Posterior vena cava (tissue), 2 donors: ENCODE measurements at regions of chr6 and their contacts with region 1.

Region 1: GRCh38 chr6:31576897-31577578 is 1.7 kb downstream of the TNF start:
- DNase-seq: no peak

Region 2: GRCh38 chr6:31016659-31017299 is 560.3 kb before region 1 on chr6:
- intact Hi-C with region 1: no loop called
- DNase-seq: no peak

Region 3: GRCh38 chr6:31559958-31560696 is 16.9 kb before region 1 on chr6:
- intact Hi-C with region 1: no loop called
- DNase-seq: peak; percentile 86

Region 4: DNA sequence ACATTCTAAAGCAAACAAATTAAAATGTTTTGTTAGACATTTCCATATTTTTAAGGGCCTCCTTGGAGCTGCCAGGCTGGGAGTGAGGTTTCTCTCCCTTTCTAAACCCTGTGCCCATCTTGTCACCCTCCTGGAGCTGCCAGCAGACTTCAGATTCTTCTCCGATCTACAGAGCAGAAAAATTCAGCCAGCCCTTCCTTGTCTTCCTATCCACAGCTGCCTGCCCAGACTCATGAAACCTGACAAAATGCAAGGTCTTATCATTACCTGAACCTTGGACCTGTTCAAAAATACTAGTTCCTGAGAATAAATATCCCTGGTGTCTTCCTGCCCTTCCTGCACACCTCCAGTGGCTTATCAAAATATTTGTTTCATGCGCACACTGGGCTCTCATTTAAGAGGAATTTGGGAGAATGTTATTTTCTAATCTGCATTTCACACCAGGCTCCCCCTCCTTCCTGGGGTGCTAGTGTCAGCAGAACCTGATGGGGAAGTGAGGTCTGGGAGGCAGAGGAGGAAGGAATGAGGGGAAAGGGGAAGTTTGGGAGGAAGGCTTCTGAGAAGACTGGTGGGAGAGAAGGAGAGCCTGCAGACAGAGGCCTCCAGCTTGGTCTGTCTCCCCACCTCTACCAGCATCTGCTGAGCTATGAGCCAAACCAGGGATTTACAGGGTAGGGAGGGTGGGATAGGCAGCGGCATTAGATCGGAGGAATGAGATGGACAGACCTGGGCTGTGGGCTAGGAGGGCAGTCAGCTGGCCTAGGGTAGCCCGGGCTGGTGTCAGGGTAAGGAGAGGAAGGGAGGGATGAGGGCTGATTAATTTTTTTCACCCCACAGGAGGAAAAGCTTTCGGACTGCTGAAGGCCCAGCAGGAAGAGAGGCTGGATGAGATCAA is 37.9 kb after region 1 on chr6 and contains the start of gene AIF1:
- intact Hi-C with region 1: loop called in 1 of 2 experiments (anchors 1 kb)
- DNase-seq: no peak
- total RNA-seq, gene AIF1: 18.1 to 68.7 TPM